Aorta (tissue), 5 donors: ENCODE measurements at regions of chr2 and their contacts with region 1.

Region 1: GRCh38 chr2:158968396-158969161 is at the start of gene TANC1:
- DNase-seq: peak; percentile 95 to 97
- ATAC-seq: peak; percentile 96
- H3K4me3 ChIP-seq: peak within 1 kb of the TSS; percentile 86 to 96
- H3K27ac ChIP-seq: peak within 1 kb of the TSS; percentile 53 to 60
- H3K4me1 ChIP-seq: peaks cover 0 to 3% of the 10 kb centered on the region in 2 donors
- H3K27me3 ChIP-seq: no peaks in the 10 kb centered on the region
- total RNA-seq, gene TANC1: 56.9 to 58.3 TPM

Region 2: DNA sequence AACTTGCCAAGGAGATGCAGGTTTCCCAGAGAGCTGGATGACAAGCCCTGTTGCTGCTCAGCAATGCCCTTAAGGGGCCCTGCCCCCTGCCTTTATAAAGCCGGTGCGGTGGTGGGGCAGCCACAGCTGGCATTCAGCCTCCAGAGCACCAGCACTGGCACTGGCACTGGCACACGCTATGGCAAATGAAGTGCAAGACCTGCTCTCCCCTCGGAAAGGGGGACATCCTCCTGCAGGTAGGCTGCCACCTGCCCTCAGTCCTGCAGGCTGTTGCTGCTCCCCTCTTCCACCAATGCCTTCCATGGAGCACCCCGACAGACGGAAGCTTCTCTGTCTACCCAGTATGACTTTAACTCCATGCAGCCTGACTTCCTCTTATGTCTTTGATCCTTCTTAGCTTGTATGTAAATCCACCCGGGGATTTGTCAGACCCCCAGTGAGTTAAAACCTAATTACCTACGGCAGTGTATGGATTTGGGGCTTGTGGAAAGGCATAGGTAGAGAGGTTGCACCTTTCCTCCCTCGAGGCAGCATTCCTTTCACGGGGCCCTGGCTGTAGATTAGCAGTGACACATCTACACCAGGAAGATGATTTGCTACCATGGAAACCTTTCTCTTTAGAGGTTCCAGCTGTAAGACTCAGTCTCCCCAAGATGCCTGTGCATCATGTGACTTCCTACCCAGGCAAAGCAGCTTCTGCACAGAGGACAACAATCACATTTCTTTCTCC is 173.2 kb before region 1 on chr2 and contains the start of gene DAPL1:
- intact Hi-C with region 1: no loop called
- DNase-seq: peak in 1 of 2 donors; percentile 49
- ATAC-seq: peak; percentile 38
- H3K4me3 ChIP-seq: no peak within 1 kb of the TSS
- H3K27ac ChIP-seq: no peak within 1 kb of the TSS
- H3K4me1 ChIP-seq: no peaks in the 10 kb centered on the region
- H3K27me3 ChIP-seq: no peaks in the 10 kb centered on the region
- total RNA-seq, gene DAPL1: not detected

Region 3: DNA sequence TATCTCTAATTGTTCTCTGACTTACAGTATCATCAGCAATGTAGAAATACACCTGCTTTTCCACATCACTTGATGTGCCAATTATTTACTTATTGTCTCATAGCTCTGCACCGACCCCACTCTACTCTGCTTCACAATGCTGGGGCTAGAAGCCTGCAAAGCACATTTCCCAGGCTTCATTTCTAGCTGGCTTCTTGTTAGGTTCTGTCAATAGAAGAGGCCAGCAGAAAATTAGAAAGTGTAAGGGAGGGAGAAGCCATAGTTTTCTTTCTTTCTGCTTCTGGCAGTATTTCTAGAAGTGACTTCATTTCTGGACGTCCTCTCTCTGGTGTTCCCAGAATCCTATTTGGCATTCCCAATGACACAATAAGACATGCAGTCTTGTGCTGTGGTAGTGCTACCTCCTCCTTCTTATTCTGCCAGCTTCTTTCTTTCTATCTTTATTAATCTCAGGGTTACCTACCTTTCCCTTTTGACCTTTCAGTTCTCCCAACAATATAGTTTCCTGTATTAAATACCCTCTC is 12.7 kb before region 1 on chr2:
- intact Hi-C with region 1: loop called in 1 of 2 experiments (anchors 1 kb)
- DNase-seq: no peak
- ATAC-seq: no peak
- H3K4me3 ChIP-seq: no peak overlapping the region
- H3K27ac ChIP-seq: no peak overlapping the region
- H3K4me1 ChIP-seq: peaks cover 0 to 3% of the 10 kb centered on the region in 2 donors
- H3K27me3 ChIP-seq: no peaks in the 10 kb centered on the region

Region 4: DNA sequence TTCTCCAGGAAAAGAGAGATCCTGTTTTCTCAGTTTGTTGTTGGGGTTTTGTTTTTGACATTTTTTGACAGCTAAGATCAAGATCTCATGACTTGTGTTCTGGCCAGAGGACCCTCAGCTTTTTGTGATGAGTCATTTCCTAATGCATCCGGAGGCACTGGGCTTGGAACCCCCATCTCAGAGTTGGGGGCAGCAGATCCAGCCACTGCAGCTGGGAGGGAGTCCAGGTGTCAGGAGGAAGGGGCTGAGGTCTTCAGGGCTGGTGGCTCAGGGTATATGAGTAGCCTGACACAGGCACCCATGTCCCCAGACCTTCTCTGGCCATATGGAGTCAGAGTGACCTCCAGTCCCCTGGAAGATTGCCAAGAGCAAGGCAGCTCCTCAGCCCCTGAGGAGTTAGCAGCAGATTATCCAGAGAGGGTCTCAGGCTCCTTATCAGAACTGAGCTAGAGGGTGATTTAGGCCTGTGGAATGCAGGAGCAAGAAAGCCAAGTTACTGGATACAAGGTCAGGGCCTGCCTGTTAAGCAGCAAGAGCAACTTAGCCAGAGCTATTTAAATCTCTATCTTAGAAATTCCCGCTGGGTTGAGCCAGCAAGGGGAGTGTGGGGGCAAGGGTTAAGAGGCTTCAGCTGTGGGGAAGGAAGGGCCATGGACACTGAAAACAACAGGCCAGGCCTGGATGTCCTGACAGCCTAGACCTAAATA is 62.2 kb after region 1 on chr2:
- intact Hi-C with region 1: loop called in 1 of 2 experiments (anchors 5 kb)
- DNase-seq: peak in 1 of 2 donors; percentile 58
- ATAC-seq: peak; percentile 86
- H3K4me3 ChIP-seq: no peak overlapping the region
- H3K27ac ChIP-seq: peak overlapping the region; percentile 64 to 81
- H3K4me1 ChIP-seq: peaks cover 7 to 20% of the 10 kb centered on the region in 2 donors
- H3K27me3 ChIP-seq: no peaks in the 10 kb centered on the region

Region 5: DNA sequence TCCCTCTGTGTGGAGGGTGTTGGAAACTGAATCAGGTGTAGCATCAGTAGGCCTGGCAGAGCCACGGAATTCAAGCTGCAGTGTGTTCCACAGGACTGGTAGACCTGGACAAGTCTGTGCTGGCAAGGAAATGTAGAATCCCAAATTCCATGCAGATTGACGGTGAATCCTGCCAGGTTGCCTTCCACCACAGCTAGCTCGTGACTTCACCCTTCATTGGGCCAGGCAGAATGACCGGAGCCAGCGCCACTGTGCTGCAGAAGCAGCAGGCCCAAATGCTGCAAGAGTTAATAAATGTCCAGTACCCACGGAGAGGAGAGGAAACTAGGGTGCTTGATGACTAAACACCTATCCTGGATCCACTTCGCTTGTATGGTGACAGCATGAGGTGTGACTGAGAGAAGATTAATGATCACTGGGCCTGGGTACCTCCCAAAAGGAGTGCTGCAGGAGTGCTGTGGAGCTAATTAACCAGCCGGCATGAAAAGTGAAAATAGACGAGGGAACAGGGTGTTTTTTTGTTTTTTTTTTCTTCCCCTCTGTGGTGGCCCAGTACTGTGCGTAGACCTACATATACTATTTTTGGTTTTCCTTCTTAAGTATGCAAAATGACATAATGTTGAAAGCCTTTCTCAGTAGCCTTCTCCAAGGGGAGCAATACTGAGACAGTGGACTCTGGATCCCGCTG is 122.1 kb after region 1 on chr2:
- intact Hi-C with region 1: loop called in 1 of 2 experiments (anchors 10 kb)
- DNase-seq: no peak
- ATAC-seq: peak; percentile 68
- H3K4me3 ChIP-seq: no peak overlapping the region
- H3K27ac ChIP-seq: peak overlapping the region; percentile 87 to 99
- H3K4me1 ChIP-seq: peaks cover 4 to 13% of the 10 kb centered on the region in 2 donors
- H3K27me3 ChIP-seq: no peaks in the 10 kb centered on the region

Region 6: DNA sequence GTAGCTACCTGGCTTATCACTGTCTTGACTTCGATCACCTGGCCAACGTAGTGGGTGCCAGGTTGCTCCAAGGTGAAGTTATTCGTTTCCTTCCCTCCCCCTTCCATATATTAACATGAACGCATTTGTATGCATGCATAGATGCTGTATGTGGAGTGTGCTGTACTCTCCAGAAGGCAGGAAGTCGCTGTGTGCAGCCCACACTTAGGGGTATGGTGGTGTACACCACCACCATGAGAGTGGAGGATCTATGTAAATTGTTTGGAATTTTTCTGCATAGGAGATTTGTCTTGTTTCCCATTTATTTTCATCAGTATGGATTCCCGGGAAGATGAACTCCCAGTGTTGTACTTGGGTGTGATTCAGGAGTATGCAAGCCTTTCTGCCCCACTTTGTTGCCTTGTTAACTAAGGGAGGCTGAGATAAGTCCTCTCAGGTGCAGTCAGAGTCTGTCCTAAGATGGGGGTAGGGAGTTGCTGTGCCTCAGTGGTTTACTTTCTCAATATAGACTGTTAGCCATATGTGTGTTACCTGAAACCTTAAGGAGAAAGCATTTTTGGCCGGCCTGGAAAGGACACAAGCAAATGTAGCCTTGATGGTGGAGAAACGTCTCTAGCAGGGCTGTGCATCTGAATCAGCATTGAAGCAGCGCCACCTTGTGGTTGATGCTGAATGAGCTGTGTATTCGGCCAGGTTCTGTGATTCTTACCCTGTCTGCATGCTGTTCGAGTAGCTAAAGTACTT is 149.7 kb after region 1 on chr2:
- intact Hi-C with region 1: loop called (anchors 5 kb)
- DNase-seq: peak; percentile 87 to 94
- ATAC-seq: peak; percentile 79
- H3K4me3 ChIP-seq: no peak overlapping the region
- H3K27ac ChIP-seq: peak overlapping the region in 1 of 2 donors; percentile 20
- H3K4me1 ChIP-seq: peaks cover 0 to 8% of the 10 kb centered on the region in 2 donors
- H3K27me3 ChIP-seq: no peaks in the 10 kb centered on the region